ENCODE measurements at regions of chr2 and their contacts with region 1.

Region 1: GRCh38 chr2:134307334-134307733 is 53.5 kb downstream of the MGAT5 start:
- DNase-seq: no peak
- ATAC-seq: no peak
- H3K4me3 ChIP-seq: no peak overlapping the region
- H3K4me3 Mint-ChIP-seq: peak overlapping the region; percentile 60
- H3K27ac ChIP-seq: peak overlapping the region in 1 of 2 donors; percentile 57
- H3K27ac Mint-ChIP-seq: peak overlapping the region; percentile 81
- H3K4me1 ChIP-seq: peaks cover 61 to 77% of the 10 kb centered on the region in 2 donors
- H3K4me1 Mint-ChIP-seq: peaks cover 89% of the 10 kb centered on the region
- H3K27me3 ChIP-seq: no peaks in the 10 kb centered on the region
- H3K27me3 Mint-ChIP-seq: no peaks in the 10 kb centered on the region
- CTCF ChIP-seq: no peak

Region 2: GRCh38 chr2:134290358-134290757 is 17.0 kb before region 1 on chr2:
- CTCF ChIA-PET with region 1: no interaction called
- POLR2A ChIA-PET with region 1: no interaction called
- intact Hi-C with region 1: loop called (anchors 2 kb)
- DNase-seq: no peak
- ATAC-seq: peak; percentile 24
- H3K4me3 ChIP-seq: peak overlapping the region in 3 of 5 experiments; percentile 10 to 20 (median 13)
- H3K4me3 Mint-ChIP-seq: no peak overlapping the region
- H3K27ac ChIP-seq: peak overlapping the region; percentile 62 to 95
- H3K27ac Mint-ChIP-seq: no peak overlapping the region
- H3K4me1 ChIP-seq: peaks cover 98 to 99% of the 10 kb centered on the region in 2 donors
- H3K4me1 Mint-ChIP-seq: peaks cover 28% of the 10 kb centered on the region
- H3K27me3 ChIP-seq: no peaks in the 10 kb centered on the region
- H3K27me3 Mint-ChIP-seq: no peaks in the 10 kb centered on the region
- CTCF ChIP-seq: no peak

Region 3: DNA sequence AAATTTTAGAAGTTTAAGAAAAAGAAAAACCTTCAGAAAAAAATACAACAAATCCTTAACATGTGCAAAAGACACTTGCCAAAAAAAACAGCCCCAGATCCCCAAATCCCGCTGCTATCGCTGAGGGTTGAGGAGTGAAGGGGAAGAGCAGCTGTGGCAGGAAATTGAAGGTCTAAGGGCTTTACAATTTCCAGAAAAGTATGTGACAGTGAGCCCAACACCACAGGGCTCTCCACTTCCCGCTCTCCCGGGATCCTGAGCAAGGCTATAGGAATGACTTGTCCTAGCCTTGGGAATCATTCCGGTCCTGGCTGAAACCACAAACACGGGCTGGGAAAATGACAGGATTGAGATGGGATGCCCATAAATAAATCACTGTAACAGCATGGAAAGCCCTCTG is 220.0 kb after region 1 on chr2:
- CTCF ChIA-PET with region 1: no interaction called
- POLR2A ChIA-PET with region 1: no interaction called
- intact Hi-C with region 1: no loop called
- DNase-seq: no peak
- ATAC-seq: no peak
- H3K4me3 ChIP-seq: no peak overlapping the region
- H3K4me3 Mint-ChIP-seq: no peak overlapping the region
- H3K27ac ChIP-seq: no peak overlapping the region
- H3K27ac Mint-ChIP-seq: no peak overlapping the region
- H3K4me1 ChIP-seq: no peaks in the 10 kb centered on the region
- H3K4me1 Mint-ChIP-seq: no peaks in the 10 kb centered on the region
- H3K27me3 ChIP-seq: no peaks in the 10 kb centered on the region
- H3K27me3 Mint-ChIP-seq: no peaks in the 10 kb centered on the region
- CTCF ChIP-seq: no peak

Measured in B cell (primary cell).